SK-N-SH (cell line): ENCODE measurements at regions of chr17 and their contacts with region 1.

Region 1: DNA sequence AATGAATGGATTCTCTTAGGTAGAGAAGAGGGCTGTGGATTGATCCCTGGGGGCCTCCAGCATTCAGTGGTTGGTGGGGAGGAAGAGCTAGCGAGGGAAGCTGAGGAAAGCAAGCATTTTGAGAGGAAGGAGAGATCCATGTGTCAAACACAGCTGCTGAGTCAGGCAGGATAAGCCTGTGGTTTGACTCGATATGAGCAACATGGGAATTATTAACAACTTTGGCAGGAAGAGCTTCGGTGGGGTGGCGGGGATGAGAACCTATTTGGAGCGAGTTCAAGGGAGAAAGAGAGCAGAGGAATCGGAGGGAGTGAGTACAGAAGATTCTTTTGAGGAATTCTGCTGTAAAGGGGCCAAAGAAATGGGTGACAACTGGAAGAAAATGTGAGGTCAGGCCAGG is 59.5 kb upstream of the CDC42EP4 start:
- DNase-seq: no peak
- H3K4me3 ChIP-seq: no peak overlapping the region
- H3K27ac ChIP-seq: no peak overlapping the region
- H3K4me1 ChIP-seq: peaks cover 6 to 8% of the 10 kb centered on the region in 2 experiments; a peak in 2 of 4 replicates
- H3K27me3 ChIP-seq: 0 out of 2 replicates have a peak, but pooled peaks cover 14% of the 10 kb centered on the region
- CTCF ChIP-seq: no peak
- EP300 ChIP-seq: no peak
- RAD21 ChIP-seq: no peak

Region 2: GRCh38 chr17:73203135-73203787 is 168.0 kb before region 1 on chr17:
- CTCF ChIA-PET with region 1: interaction called, 10 read pairs
- POLR2A ChIA-PET with region 1: no interaction called
- DNase-seq: no peak
- H3K4me3 ChIP-seq: no peak overlapping the region
- H3K27ac ChIP-seq: peak overlapping the region; percentile 1 to 11; a peak in 1 of 4 replicates
- H3K4me1 ChIP-seq: peaks cover 0 to 6% of the 10 kb centered on the region in 2 experiments; a peak in 1 of 4 replicates
- H3K27me3 ChIP-seq: no peaks in the 10 kb centered on the region
- CTCF ChIP-seq: no peak
- EP300 ChIP-seq: no peak
- RAD21 ChIP-seq: no peak

Region 3: GRCh38 chr17:73247726-73248125 is 123.6 kb before region 1 on chr17:
- CTCF ChIA-PET with region 1: interaction called, 691 read pairs
- POLR2A ChIA-PET with region 1: no interaction called
- DNase-seq: no peak
- H3K4me3 ChIP-seq: no peak overlapping the region
- H3K27ac ChIP-seq: no peak overlapping the region
- H3K4me1 ChIP-seq: no peaks in the 10 kb centered on the region
- H3K27me3 ChIP-seq: no peaks in the 10 kb centered on the region
- CTCF ChIP-seq: peak; percentile 41
- EP300 ChIP-seq: no peak
- RAD21 ChIP-seq: no peak

Region 4: DNA sequence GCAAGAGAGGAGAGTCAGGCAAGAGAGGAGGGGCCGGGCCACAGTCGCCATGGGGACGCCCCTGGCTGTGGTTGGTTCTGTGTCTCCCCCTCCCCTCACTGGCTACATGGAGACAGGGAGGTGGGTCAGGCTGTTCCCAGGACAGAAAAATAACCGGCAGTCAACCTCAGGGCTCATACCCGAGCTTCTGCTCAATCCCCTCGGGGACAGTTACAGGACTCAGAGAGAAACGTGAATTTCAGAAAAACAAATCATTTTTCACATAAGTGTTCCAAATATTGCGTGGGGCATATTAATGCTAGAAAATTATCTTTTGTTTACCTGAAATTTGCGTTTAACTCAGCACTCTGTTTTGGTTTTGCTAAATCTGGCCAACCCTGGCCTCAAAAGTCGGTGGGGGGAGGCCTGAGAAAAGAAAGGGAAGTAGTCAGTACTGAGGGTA is 87.4 kb before region 1 on chr17:
- CTCF ChIA-PET with region 1: interaction called, 30 read pairs
- POLR2A ChIA-PET with region 1: no interaction called
- DNase-seq: peak; percentile 92
- H3K4me3 ChIP-seq: no peak overlapping the region
- H3K27ac ChIP-seq: peak overlapping the region in 1 of 2 experiments; percentile 74; a peak in 2 of 4 replicates
- H3K4me1 ChIP-seq: peaks cover 0 to 54% of the 10 kb centered on the region in 2 experiments; a peak in 3 of 4 replicates
- H3K27me3 ChIP-seq: no peaks in the 10 kb centered on the region
- CTCF ChIP-seq: no peak
- EP300 ChIP-seq: no peak
- RAD21 ChIP-seq: no peak

Region 5: GRCh38 chr17:73304971-73305812 is 66.1 kb before region 1 on chr17:
- CTCF ChIA-PET with region 1: interaction called, 154 read pairs
- POLR2A ChIA-PET with region 1: interaction called, 30 read pairs
- DNase-seq: no peak
- H3K4me3 ChIP-seq: peak overlapping the region; percentile 18 to 63; a peak in 3 of 4 replicates
- H3K27ac ChIP-seq: peak overlapping the region; percentile 31 to 96; a peak in 3 of 4 replicates
- H3K4me1 ChIP-seq: peaks cover 68 to 79% of the 10 kb centered on the region in 2 experiments
- H3K27me3 ChIP-seq: no peaks in the 10 kb centered on the region
- CTCF ChIP-seq: peak; percentile 55
- EP300 ChIP-seq: peak in 1 of 2 experiments; percentile 31; a peak in 1 of 4 replicates
- RAD21 ChIP-seq: peak; percentile 28; the same call in 1 of the 2 replicates

Region 6: DNA sequence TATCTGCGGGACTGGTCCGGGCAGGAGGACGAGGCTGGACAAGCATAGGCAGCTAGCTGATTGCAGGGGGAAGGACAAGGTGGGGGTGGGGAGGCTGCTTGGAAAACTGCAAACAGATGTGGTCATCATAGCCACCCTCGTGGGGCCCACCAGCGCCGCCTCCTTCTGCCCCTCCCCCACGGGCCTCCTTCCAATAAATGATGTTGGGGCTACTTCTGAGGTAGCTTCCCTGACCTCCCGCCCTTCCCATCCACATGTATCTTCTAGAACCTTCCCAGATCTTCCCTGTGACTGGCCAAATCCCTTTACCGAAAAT is 47.2 kb before region 1 on chr17:
- CTCF ChIA-PET with region 1: interaction called, 14 read pairs
- POLR2A ChIA-PET with region 1: no interaction called
- DNase-seq: no peak
- H3K4me3 ChIP-seq: no peak overlapping the region
- H3K27ac ChIP-seq: no peak overlapping the region
- H3K4me1 ChIP-seq: peaks cover 0 to 28% of the 10 kb centered on the region in 2 experiments; a peak in 1 of 4 replicates
- H3K27me3 ChIP-seq: no peaks in the 10 kb centered on the region
- CTCF ChIP-seq: no peak
- EP300 ChIP-seq: no peak
- RAD21 ChIP-seq: no peak

Region 7: DNA sequence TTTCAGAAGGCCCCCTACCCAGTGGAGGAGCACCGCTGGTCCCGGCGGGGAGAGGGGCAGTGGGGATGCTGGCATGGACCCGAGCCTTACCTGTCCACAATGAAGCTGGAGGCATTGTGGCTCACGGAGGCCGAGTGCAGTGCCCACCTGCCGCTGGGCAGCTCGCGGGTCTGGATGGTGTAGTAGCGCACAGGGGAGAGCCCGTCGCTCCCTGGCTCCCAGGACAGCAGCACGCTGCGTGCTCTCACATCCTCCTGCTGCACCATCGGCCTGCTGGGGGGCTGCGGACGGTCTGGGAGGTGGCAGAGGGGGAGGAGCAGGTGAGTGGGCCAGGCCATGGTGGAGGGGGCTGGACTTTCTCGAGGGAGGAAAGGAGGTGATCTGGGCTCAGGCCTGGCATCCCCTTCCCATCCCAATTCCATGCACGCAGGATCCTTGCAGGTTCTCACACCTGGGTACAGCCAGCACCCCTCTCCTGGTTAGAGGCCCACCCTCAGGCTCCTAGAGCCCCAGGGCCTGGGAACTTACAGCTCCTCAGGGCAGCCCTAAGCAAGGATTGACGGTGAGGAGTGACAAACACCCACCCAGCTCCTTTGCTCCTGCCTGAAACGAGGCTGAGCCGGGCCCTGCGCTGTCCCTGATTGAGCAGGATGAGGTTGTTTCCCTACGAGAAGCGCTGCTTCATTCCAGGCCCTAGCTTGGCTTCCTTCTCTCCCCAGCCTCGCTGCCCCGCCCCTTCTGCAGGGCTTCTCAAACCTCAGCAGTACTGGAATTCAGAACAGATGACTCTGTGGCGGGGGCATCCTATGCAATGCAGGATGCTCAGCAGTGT is 16.7 kb after region 1 on chr17:
- CTCF ChIA-PET with region 1: interaction called, 21 read pairs
- POLR2A ChIA-PET with region 1: no interaction called
- DNase-seq: no peak
- H3K4me3 ChIP-seq: no peak overlapping the region
- H3K27ac ChIP-seq: no peak overlapping the region
- H3K4me1 ChIP-seq: no peaks in the 10 kb centered on the region
- H3K27me3 ChIP-seq: peaks cover 33% of the 10 kb centered on the region
- CTCF ChIP-seq: no peak
- EP300 ChIP-seq: no peak
- RAD21 ChIP-seq: no peak

Region 8: DNA sequence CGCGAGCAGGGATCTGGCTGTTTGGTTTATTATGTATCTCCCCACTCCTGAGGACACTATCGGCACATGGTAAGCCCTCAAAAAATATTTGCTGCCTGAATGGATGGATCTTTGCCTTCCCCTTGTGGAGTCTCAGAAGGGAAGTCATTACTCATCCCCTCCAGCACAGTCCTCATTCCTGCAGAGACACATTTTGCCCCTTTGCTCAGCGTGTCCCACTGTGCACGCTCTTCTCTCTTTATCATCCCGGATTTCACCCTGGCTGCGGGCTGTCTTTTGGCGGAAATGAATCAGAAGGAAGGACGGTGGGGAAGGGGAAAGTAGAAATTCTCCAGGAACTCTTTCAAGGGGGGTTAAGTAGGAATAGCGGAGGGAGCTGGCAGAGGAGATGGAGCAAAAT is 65.7 kb after region 1 on chr17:
- CTCF ChIA-PET with region 1: no interaction called
- POLR2A ChIA-PET with region 1: no interaction called
- DNase-seq: no peak
- H3K4me3 ChIP-seq: no peak overlapping the region
- H3K27ac ChIP-seq: no peak overlapping the region
- H3K4me1 ChIP-seq: no peaks in the 10 kb centered on the region
- H3K27me3 ChIP-seq: no peaks in the 10 kb centered on the region
- CTCF ChIP-seq: no peak
- EP300 ChIP-seq: no peak
- RAD21 ChIP-seq: no peak

Region 9: GRCh38 chr17:73566905-73567782 is 195.9 kb after region 1 on chr17:
- CTCF ChIA-PET with region 1: no interaction called
- POLR2A ChIA-PET with region 1: no interaction called
- DNase-seq: no peak
- H3K4me3 ChIP-seq: no peak overlapping the region
- H3K27ac ChIP-seq: no peak overlapping the region
- H3K4me1 ChIP-seq: no peaks in the 10 kb centered on the region
- H3K27me3 ChIP-seq: no peaks in the 10 kb centered on the region
- CTCF ChIP-seq: no peak
- EP300 ChIP-seq: no peak
- RAD21 ChIP-seq: no peak